Sigmoid colon (tissue), 7 donors: ENCODE measurements at regions of chr7 and their contacts with region 1.

Region 1: GRCh38 chr7:27662490-27663205 is at the start of gene HIBADH:
- DNase-seq: peak; percentile 100
- H3K4me3 ChIP-seq: peak within 1 kb of the TSS; percentile 72 to 97 (median 90)
- H3K27ac ChIP-seq: peak within 1 kb of the TSS; percentile 91 to 99 (median 93)
- H3K4me1 ChIP-seq: peaks cover 0 to 16% (median 13%) of the 10 kb centered on the region in 4 donors
- H3K27me3 ChIP-seq: no peaks in the 10 kb centered on the region
- CTCF ChIP-seq: peak in 1 of 4 experiments; percentile 17
- EP300 ChIP-seq: peak in 3 of 4 donors; percentile 59 to 88 (median 74)
- POLR2A ChIP-seq: peak; percentile 69 to 84
- total RNA-seq, gene HIBADH: 63.5 to 89.5 (median 80.0) TPM

Region 2: GRCh38 chr7:27576360-27576944 is 86.2 kb before region 1 on chr7:
- intact Hi-C with region 1: no loop called
- DNase-seq: no peak
- H3K4me3 ChIP-seq: no peak overlapping the region
- H3K27ac ChIP-seq: no peak overlapping the region
- H3K4me1 ChIP-seq: no peaks in the 10 kb centered on the region
- H3K27me3 ChIP-seq: no peaks in the 10 kb centered on the region
- CTCF ChIP-seq: peak in 3 of 4 experiments; percentile 23 to 58 (median 47)
- EP300 ChIP-seq: no peak
- POLR2A ChIP-seq: no peak

Region 3: DNA sequence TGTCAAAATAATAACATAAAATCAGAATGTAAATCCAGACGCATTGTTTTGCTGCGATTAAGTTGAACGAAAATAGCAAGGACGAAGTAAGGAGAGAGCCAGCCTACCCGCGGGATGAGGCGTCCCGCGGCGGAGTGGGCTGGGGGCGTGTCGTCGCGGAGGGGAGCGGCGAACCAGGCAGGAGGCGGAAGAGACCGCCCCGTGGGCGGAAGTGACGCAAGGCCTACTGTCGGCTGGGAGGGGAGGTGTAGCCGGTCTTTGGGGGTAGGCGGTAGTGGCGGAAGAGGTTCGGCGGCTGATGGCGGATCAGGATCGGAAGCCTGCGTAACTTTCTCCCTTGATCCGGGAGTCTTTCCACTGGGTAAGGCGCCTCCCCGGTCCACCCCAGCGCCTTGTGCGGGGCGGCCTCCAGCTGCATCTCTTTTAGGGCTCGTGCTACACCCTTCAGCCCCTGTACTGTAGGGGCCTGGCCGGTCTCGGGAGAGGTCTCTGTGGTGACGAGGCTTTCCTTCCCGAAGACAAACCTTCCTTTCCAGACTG is 77.3 kb after region 1 on chr7 and contains the start of gene TAX1BP1:
- intact Hi-C with region 1: loop called (anchors 1 kb)
- DNase-seq: peak; percentile 98
- H3K4me3 ChIP-seq: peak within 1 kb of the TSS; percentile 68 to 93 (median 90)
- H3K27ac ChIP-seq: peak within 1 kb of the TSS; percentile 93 to 99 (median 97)
- H3K4me1 ChIP-seq: peaks cover 0 to 47% (median 31%) of the 10 kb centered on the region in 4 donors
- H3K27me3 ChIP-seq: no peaks in the 10 kb centered on the region
- CTCF ChIP-seq: no peak
- EP300 ChIP-seq: peak in 1 of 4 donors; percentile 18
- POLR2A ChIP-seq: peak; percentile 99
- total RNA-seq, gene TAX1BP1: 109 to 170 (median 138) TPM

Region 4: GRCh38 chr7:28125431-28126409 is 463.1 kb after region 1 on chr7:
- intact Hi-C with region 1: no loop called
- DNase-seq: no peak
- H3K4me3 ChIP-seq: no peak overlapping the region
- H3K27ac ChIP-seq: peak overlapping the region; percentile 50 to 84 (median 73)
- H3K4me1 ChIP-seq: peaks cover 0 to 64% (median 53%) of the 10 kb centered on the region in 4 donors
- H3K27me3 ChIP-seq: no peaks in the 10 kb centered on the region
- CTCF ChIP-seq: no peak
- EP300 ChIP-seq: no peak
- POLR2A ChIP-seq: no peak